ENCODE measurements at regions of chr12 and their contacts with region 1.

Region 1: GRCh38 chr12:98845957-98846356 is 200.9 kb downstream of the APAF1 start:
- DNase-seq: no peak
- H3K4me3 Mint-ChIP-seq: no peak overlapping the region
- H3K27ac Mint-ChIP-seq: no peak overlapping the region
- H3K4me1 Mint-ChIP-seq: no peaks in the 10 kb centered on the region
- H3K27me3 Mint-ChIP-seq: peaks cover 45% of the 10 kb centered on the region
- CTCF ChIP-seq: no peak

Region 2: DNA sequence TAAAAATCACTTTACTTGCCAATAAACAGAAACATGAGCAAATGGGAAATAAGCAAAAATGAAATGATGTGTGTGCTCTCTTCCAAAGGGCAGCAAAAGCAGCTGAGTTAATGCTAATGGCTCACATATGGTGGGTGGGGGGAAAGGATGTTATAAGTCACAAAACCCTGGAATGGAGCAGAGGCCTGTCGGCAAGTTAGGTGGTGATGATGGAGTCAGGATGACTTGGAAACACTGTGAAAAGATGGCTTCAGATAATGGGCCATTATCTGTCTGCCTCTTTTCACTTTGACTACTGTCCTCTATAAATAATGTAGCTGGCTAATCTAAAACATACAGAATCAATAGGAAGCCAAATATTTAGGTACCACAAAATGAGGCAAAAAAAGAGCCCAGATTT is 27.8 kb after region 1 on chr12:
- CTCF ChIA-PET with region 1: interaction called, 11 read pairs
- intact Hi-C with region 1: no loop called
- DNase-seq: no peak
- H3K4me3 Mint-ChIP-seq: no peak overlapping the region
- H3K27ac Mint-ChIP-seq: no peak overlapping the region
- H3K4me1 Mint-ChIP-seq: no peaks in the 10 kb centered on the region
- H3K27me3 Mint-ChIP-seq: peaks cover 28% of the 10 kb centered on the region
- CTCF ChIP-seq: no peak